ENCODE measurements at regions of chr20 and their contacts with region 1.

Region 1: GRCh38 chr20:34876162-34877001 is at the start of gene ACSS2:
- DNase-seq: peak; percentile 99
- H3K4me3 Mint-ChIP-seq: peak within 1 kb of the TSS; percentile 84
- H3K27ac Mint-ChIP-seq: peak within 1 kb of the TSS; percentile 80
- H3K4me1 Mint-ChIP-seq: peaks cover 51% of the 10 kb centered on the region
- H3K27me3 Mint-ChIP-seq: no peaks in the 10 kb centered on the region
- total RNA-seq, gene ACSS2: 45.6 to 47.7 TPM

Region 2: GRCh38 chr20:34473262-34473883 is 403.0 kb before region 1 on chr20:
- CTCF ChIA-PET with region 1: no interaction called
- POLR2A ChIA-PET with region 1: no interaction called
- intact Hi-C with region 1: no loop called
- DNase-seq: peak; percentile 64
- H3K4me3 Mint-ChIP-seq: no peak overlapping the region
- H3K27ac Mint-ChIP-seq: no peak overlapping the region
- H3K4me1 Mint-ChIP-seq: peaks cover 8% of the 10 kb centered on the region
- H3K27me3 Mint-ChIP-seq: no peaks in the 10 kb centered on the region

Region 3: DNA sequence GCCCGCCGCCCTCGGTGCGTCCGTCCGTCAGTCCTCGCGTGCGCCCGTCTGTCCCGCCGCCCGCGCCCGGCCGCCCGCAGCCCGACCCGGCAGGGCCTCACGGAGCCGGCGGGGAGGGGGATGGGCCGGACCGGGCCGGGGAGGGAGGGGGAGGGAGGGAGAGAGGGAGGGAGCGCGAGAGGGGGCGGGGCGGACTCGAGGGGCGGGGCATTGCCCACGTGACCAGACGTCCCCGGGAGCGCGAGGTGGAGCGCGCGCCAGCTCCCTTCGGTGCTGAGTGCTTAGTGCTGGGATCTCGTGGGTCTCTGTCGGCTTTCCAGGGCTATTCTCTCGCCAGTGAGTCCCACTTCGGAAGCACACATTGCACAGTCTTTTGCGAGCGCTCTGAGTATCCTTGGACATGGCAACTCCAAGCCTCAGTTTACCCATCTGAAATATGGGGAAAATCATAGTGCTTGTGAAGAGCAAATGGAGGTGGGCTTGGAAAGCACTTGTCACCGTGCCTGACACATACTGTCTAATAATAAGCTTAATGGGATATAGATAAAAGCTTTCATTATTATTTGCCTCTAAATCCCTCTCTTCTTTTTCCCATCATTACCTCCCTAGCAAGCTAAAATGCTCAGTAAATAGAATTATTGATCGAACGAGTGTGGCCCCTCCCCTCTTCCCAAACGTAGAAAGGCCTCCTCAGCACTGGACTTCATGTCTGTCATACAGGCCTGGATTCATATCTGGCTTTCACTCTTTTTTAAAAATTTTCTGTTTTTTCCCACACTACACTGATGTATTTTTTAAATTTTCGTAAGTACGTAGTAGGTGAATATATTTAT is 50.6 kb before region 1 on chr20 and contains the start of gene NCOA6:
- CTCF ChIA-PET with region 1: interaction called, 5 read pairs
- POLR2A ChIA-PET with region 1: interaction called, 3 read pairs
- intact Hi-C with region 1: loop called (anchors 2 kb)
- DNase-seq: peak; percentile 91
- H3K4me3 Mint-ChIP-seq: peak within 1 kb of the TSS; percentile 99
- H3K27ac Mint-ChIP-seq: peak within 1 kb of the TSS; percentile 94
- H3K4me1 Mint-ChIP-seq: peaks cover 37% of the 10 kb centered on the region
- H3K27me3 Mint-ChIP-seq: no peaks in the 10 kb centered on the region
- total RNA-seq, gene NCOA6: 19.6 to 20.7 TPM

Region 4: GRCh38 chr20:34863421-34863965 is 12.9 kb before region 1 on chr20:
- CTCF ChIA-PET with region 1: interaction called, 10 read pairs
- POLR2A ChIA-PET with region 1: no interaction called
- intact Hi-C with region 1: no loop called
- DNase-seq: no peak
- H3K4me3 Mint-ChIP-seq: no peak overlapping the region
- H3K27ac Mint-ChIP-seq: no peak overlapping the region
- H3K4me1 Mint-ChIP-seq: peaks cover 2% of the 10 kb centered on the region
- H3K27me3 Mint-ChIP-seq: no peaks in the 10 kb centered on the region

Region 5: GRCh38 chr20:34922654-34923424 is 46.5 kb after region 1 on chr20:
- CTCF ChIA-PET with region 1: interaction called, 8 read pairs
- POLR2A ChIA-PET with region 1: no interaction called
- intact Hi-C with region 1: loop called (anchors 1 kb)
- DNase-seq: no peak
- H3K4me3 Mint-ChIP-seq: no peak overlapping the region
- H3K27ac Mint-ChIP-seq: no peak overlapping the region
- H3K4me1 Mint-ChIP-seq: peaks cover 35% of the 10 kb centered on the region
- H3K27me3 Mint-ChIP-seq: no peaks in the 10 kb centered on the region

Region 6: DNA sequence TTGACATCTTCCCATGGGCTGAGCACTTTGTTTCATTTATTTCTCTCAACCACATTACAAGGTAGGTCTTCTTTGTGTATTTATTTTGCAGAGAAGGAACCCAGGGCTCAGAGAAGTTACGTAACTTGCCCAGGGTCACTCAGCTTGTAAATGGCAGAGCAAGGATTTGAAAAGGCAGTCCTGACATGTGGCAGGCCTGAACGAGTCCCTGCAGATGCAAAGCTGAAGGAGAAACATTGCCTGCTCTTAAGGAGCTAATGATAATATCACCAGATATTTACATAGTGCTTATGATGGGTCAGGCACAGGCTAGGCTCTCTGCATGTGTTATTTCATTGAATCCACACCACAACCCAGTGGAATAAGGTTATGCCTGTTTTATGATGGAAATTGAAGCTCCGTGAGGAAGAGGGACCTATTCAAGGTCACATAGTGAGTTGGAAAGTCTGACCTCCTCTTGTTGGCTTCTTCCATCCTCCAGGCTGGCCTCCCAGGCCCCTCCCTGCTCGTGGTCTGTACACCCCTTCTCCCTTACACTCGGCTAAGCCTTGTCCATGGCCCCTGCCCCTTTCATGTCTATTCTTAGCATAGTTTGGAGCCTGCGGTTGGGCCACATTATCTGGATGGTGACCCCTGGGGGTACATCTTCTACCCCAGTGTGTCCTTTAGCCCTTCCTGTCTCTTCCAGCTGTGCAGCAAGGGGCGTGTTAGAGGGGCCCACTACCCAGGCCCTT is 91.8 kb after region 1 on chr20:
- CTCF ChIA-PET with region 1: interaction called, 11 read pairs
- POLR2A ChIA-PET with region 1: interaction called, 3 read pairs
- intact Hi-C with region 1: no loop called
- DNase-seq: no peak
- H3K4me3 Mint-ChIP-seq: no peak overlapping the region
- H3K27ac Mint-ChIP-seq: no peak overlapping the region
- H3K4me1 Mint-ChIP-seq: no peaks in the 10 kb centered on the region
- H3K27me3 Mint-ChIP-seq: no peaks in the 10 kb centered on the region

Region 7: DNA sequence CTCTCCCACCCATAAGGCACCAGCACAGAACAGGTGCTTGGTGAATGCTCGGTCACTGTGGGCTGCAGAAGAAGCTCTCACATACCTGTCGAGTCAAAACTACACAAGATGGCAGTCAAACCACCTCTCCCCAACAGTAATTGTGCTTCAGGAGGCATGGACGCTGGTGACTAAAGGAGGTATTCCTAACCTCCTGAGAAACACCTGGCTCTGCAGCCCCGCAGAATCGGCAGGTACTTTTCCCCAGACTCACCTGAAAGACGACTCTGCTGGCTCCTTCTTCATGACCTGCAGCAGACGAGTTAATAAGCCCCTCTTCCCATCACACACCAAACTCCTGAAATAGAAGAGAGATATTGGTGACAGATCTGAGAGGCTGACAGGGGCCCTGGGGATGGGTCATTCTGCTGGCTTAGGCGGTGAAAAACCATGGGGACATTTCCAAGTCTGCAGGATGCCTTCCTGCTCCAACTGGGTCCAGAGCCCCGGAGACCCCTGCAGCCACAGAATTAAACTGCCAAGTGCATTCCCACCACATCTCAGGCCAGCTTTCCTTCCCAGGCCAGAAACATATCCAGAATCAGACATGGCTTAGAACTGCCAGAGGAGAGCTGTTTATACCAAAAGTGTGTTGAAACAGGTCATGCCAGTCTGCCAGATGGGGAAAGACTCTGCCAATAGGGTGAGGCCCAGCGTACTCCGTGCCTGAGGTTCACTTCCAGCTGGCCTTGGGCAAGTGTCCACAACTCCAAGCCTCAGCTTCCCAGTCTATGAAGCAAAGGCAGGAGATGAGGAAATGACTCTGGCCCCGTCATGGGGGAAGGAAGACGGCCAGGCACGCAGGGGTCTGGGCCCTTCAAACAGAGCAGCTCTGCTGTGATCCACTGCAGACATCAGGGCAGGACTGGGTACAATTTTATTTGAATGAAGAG is 132.3 kb after region 1 on chr20:
- CTCF ChIA-PET with region 1: no interaction called
- POLR2A ChIA-PET with region 1: no interaction called
- intact Hi-C with region 1: no loop called
- DNase-seq: no peak
- H3K4me3 Mint-ChIP-seq: no peak overlapping the region
- H3K27ac Mint-ChIP-seq: no peak overlapping the region
- H3K4me1 Mint-ChIP-seq: no peaks in the 10 kb centered on the region
- H3K27me3 Mint-ChIP-seq: no peaks in the 10 kb centered on the region

Region 8: GRCh38 chr20:35619196-35620095 is 743.1 kb after region 1 on chr20:
- CTCF ChIA-PET with region 1: no interaction called
- POLR2A ChIA-PET with region 1: no interaction called
- intact Hi-C with region 1: loop called (anchors 10 kb)
- DNase-seq: peak; percentile 94
- H3K4me3 Mint-ChIP-seq: peak overlapping the region; percentile 83
- H3K27ac Mint-ChIP-seq: peak overlapping the region; percentile 90
- H3K4me1 Mint-ChIP-seq: peaks cover 45% of the 10 kb centered on the region
- H3K27me3 Mint-ChIP-seq: peaks cover 2% of the 10 kb centered on the region